ENCODE measurements at regions of chr22 and their contacts with region 1.

Region 1: GRCh38 chr22:34950489-34950888 is 115.5 kb upstream of the ISX start:
- DNase-seq: no peak
- H3K4me3 ChIP-seq: no peak overlapping the region
- H3K4me3 Mint-ChIP-seq: no peak overlapping the region
- H3K27ac Mint-ChIP-seq: no peak overlapping the region
- H3K4me1 ChIP-seq: no peaks in the 10 kb centered on the region
- H3K4me1 Mint-ChIP-seq: no peaks in the 10 kb centered on the region
- H3K27me3 ChIP-seq: no peaks in the 10 kb centered on the region
- H3K27me3 Mint-ChIP-seq: peaks cover 8% of the 10 kb centered on the region
- CTCF ChIP-seq: no peak

Region 2: DNA sequence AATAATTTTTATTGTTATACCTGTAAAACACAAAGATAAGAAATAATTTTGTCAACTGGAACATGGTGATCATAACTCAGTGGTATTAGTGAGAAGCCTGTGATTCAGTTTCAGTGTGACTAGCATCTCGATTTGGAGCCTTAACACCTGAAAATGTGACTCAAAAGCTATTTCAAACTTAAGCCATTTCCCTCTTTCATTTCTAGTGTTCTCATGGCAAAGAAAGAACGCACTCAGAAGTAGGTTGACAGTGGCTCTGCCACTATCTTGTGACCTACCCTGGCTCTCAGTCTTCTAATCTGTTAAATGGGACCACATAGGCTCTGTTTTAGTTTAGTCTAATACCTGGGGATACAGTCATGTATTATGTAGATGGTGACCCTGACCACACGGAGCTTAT is 178.1 kb after region 1 on chr22:
- CTCF ChIA-PET with region 1: interaction called, 10 read pairs
- POLR2A ChIA-PET with region 1: no interaction called
- intact Hi-C with region 1: no loop called
- DNase-seq: no peak
- H3K4me3 ChIP-seq: no peak overlapping the region
- H3K4me3 Mint-ChIP-seq: no peak overlapping the region
- H3K27ac Mint-ChIP-seq: no peak overlapping the region
- H3K4me1 ChIP-seq: no peaks in the 10 kb centered on the region
- H3K4me1 Mint-ChIP-seq: no peaks in the 10 kb centered on the region
- H3K27me3 ChIP-seq: no peaks in the 10 kb centered on the region; the same call in 1 of the 2 replicates
- H3K27me3 Mint-ChIP-seq: peaks cover 9% of the 10 kb centered on the region
- CTCF ChIP-seq: no peak